Left colon (tissue), 2 donors: ENCODE measurements at regions of chr9 and their contacts with region 1.

Region 1: GRCh38 chr9:76136986-76137385 is 246.5 kb downstream of the PCSK5 start:
- DNase-seq: no peak
- ATAC-seq: peak; percentile 43

Region 2: GRCh38 chr9:75873712-75874111 is 263.3 kb before region 1 on chr9:
- intact Hi-C with region 1: loop called in 1 of 2 experiments (anchors 10 kb)
- DNase-seq: no peak
- ATAC-seq: no peak

Region 3: DNA sequence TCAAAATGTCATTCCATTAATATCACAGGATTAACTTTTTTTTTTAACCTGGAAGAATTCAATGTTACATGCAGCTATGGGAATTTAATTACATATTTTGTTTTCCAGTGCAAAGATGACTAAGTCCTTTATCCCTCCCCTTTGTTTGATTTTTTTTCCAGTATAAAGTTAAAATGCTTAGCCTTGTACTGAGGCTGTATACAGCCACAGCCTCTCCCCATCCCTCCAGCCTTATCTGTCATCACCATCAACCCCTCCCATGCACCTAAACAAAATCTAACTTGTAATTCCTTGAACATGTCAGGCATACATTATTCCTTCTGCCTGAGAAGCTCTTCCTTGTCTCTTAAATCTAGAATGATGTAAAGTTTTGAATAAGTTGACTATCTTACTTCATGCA is 647.9 kb after region 1 on chr9:
- intact Hi-C with region 1: no loop called
- DNase-seq: no peak
- ATAC-seq: peak; percentile 54